Cardiac septum (tissue), 1 donor: ENCODE measurements at regions of chr1 and their contacts with region 1.

Region 1: GRCh38 chr1:218330043-218330623 is 15.0 kb upstream of the TGFB2 start:
- DNase-seq: no peak

Region 2: DNA sequence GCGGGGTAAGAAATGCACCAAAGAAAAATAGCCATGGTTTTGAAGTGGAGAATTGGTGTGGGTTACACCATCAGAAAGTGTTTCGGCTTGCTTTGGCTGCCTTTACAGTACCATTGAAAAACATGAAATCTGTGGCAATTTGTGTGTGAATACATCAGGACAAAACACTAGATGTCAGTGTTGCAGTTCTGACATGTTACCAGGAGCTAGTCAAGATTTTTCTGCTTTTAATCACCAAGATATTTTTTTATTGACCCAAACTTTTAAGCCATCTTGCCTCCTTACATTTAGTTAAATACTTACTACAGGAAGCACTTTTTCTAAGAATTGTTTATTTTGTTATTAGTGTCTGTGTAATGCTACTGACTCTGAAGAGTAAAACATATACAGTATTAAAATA is 30.7 kb before region 1 on chr1:
- intact Hi-C with region 1: no loop called
- DNase-seq: no peak

Region 3: DNA sequence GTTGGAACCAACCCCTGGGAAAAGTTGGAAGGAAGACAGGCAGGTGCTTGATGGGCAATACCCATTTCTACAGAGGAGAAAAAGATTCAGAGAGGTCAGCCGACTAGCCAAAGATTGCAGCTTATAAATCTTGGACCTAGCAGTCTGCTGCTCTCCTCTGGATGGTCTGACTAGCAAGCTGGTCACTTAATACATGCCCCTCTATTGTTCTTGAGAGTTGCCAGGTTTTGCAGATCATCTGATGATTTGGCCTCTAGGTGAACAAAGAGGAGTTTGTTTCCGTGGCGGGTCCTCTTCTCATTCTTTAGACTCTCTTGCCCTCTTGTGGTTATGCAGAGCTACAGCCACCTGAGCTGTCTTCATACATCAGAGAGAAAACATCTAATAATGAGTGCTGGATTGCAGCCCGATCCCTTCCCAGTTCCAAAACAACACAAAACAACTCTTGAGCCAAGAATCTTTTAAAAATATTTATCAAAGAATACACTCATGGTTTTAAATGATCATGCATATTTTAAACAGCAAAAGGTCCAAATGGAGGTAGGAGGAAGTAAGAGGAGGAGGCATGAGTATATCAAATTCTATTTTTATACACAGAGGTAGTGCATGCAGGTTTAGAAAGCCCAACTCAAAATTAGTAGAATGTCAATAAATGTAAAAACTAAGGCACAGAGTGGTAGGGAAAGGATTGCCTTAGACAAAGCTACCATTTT is 1482.5 kb after region 1 on chr1:
- intact Hi-C with region 1: loop called (anchors 2 kb)
- DNase-seq: no peak